Thyroid gland (tissue), 4 donors: ENCODE measurements at regions of chr7 and their contacts with region 1.

Region 1: GRCh38 chr7:94394399-94395140 is at the start of gene COL1A2:
- DNase-seq: peak; percentile 59 to 60
- H3K4me3 ChIP-seq: peak within 1 kb of the TSS; percentile 11 to 43 (median 35)
- H3K27ac ChIP-seq: peak within 1 kb of the TSS; percentile 3 to 76 (median 70)
- H3K4me1 ChIP-seq: peaks cover 0 to 5% of the 10 kb centered on the region in 2 donors
- H3K27me3 ChIP-seq: no peaks in the 10 kb centered on the region
- CTCF ChIP-seq: no peak
- POLR2A ChIP-seq: peak in 1 of 2 donors; percentile 33
- total RNA-seq, gene COL1A2: 50.4 to 143 (median 88.4) TPM

Region 2: GRCh38 chr7:94294471-94295131 is 100.0 kb before region 1 on chr7:
- intact Hi-C with region 1: loop called (anchors 5 kb)
- DNase-seq: no peak
- H3K4me3 ChIP-seq: no peak overlapping the region
- H3K27ac ChIP-seq: no peak overlapping the region
- H3K4me1 ChIP-seq: no peaks in the 10 kb centered on the region
- H3K27me3 ChIP-seq: no peaks in the 10 kb centered on the region
- CTCF ChIP-seq: no peak
- POLR2A ChIP-seq: no peak

Region 3: GRCh38 chr7:94497874-94498670 is 103.5 kb after region 1 on chr7:
- intact Hi-C with region 1: no loop called
- DNase-seq: no peak
- H3K4me3 ChIP-seq: no peak overlapping the region
- H3K27ac ChIP-seq: no peak overlapping the region
- H3K4me1 ChIP-seq: no peaks in the 10 kb centered on the region
- H3K27me3 ChIP-seq: no peaks in the 10 kb centered on the region
- CTCF ChIP-seq: no peak
- POLR2A ChIP-seq: no peak